CD4-positive, alpha-beta T cell (primary cell): ENCODE measurements at regions of chr1 and their contacts with region 1.

Region 1: GRCh38 chr1:107782217-107782845 is 182.6 kb downstream of the VAV3 start:
- DNase-seq: peak in 8 of 14 experiments; percentile 16 to 84 (median 52)
- ATAC-seq: no peak
- H3K4me3 ChIP-seq: no peak overlapping the region
- H3K4me3 Mint-ChIP-seq: no peak overlapping the region
- H3K27ac ChIP-seq: no peak overlapping the region
- H3K27ac Mint-ChIP-seq: no peak overlapping the region
- H3K4me1 ChIP-seq: peaks cover 17% of the 10 kb centered on the region
- H3K4me1 Mint-ChIP-seq: peaks cover 30% of the 10 kb centered on the region
- H3K27me3 ChIP-seq: no peaks in the 10 kb centered on the region
- H3K27me3 Mint-ChIP-seq: no peaks in the 10 kb centered on the region
- CTCF ChIP-seq: peak; percentile 86

Region 2: DNA sequence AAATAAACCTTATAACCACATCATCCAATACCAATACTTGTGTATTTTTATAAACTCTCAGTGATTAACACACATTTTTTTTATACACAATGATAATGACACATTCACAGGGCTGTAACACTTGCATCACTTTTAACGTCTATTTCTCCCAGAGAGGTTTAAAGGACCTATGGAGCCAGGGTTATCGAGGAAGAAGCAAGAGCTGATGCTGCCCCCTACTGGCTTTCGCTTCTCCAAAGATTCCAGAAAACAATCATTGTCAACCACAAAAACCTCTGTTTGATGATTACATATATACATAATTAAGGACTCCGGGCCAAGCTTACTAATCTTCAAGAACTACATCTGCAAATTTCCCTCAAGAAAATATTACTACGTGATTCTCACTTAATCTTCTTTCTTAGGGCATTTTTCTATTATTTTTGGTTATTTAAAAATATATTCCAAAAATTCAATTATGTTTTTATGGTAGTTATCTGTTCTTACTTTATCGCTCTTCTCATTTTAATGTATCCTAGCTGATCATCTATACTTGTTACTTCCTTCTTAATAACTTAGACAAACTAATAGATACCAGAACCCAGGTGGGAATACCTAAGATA is 31.9 kb before region 1 on chr1:
- CTCF ChIA-PET with region 1: no interaction called
- POLR2A ChIA-PET with region 1: no interaction called
- intact Hi-C with region 1: no loop called
- DNase-seq: peak in 4 of 14 experiments; percentile 15 to 25 (median 22)
- ATAC-seq: no peak
- H3K4me3 ChIP-seq: no peak overlapping the region
- H3K4me3 Mint-ChIP-seq: no peak overlapping the region
- H3K27ac ChIP-seq: no peak overlapping the region
- H3K27ac Mint-ChIP-seq: no peak overlapping the region
- H3K4me1 ChIP-seq: no peaks in the 10 kb centered on the region
- H3K4me1 Mint-ChIP-seq: no peaks in the 10 kb centered on the region
- H3K27me3 ChIP-seq: no peaks in the 10 kb centered on the region
- H3K27me3 Mint-ChIP-seq: no peaks in the 10 kb centered on the region
- CTCF ChIP-seq: peak; percentile 35

Region 3: DNA sequence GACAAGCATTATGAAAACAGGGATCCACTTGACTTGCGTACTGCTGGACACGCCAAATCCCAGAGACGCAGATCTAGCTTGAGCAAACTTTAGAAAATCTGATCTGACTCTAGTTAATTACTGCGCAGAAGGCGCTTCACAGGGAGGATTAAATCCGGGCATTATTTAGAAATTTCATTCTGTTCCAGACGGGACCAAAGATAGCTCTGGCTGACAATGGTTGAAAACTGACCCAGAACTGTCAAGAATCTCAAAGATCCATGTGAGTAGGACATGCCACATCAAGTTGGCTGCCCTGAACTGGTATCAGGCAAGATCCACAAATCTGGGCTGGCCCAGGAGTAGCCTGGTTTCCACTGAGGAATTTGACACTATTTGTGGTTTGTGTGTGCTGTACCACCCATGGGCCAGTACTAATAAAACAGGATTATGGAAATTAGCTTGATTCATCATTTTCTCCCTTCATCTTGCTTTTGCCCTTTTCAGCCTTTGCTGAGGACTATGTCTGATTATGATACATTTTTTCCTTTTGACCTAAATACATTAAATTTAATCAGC is 11.6 kb after region 1 on chr1:
- CTCF ChIA-PET with region 1: interaction called, 21 read pairs
- POLR2A ChIA-PET with region 1: no interaction called
- intact Hi-C with region 1: no loop called
- DNase-seq: no peak
- ATAC-seq: no peak
- H3K4me3 ChIP-seq: no peak overlapping the region
- H3K4me3 Mint-ChIP-seq: no peak overlapping the region
- H3K27ac ChIP-seq: no peak overlapping the region
- H3K27ac Mint-ChIP-seq: no peak overlapping the region
- H3K4me1 ChIP-seq: peaks cover under 1% of the 10 kb centered on the region
- H3K4me1 Mint-ChIP-seq: peaks cover 28% of the 10 kb centered on the region
- H3K27me3 ChIP-seq: no peaks in the 10 kb centered on the region
- H3K27me3 Mint-ChIP-seq: no peaks in the 10 kb centered on the region
- CTCF ChIP-seq: no peak

Region 4: DNA sequence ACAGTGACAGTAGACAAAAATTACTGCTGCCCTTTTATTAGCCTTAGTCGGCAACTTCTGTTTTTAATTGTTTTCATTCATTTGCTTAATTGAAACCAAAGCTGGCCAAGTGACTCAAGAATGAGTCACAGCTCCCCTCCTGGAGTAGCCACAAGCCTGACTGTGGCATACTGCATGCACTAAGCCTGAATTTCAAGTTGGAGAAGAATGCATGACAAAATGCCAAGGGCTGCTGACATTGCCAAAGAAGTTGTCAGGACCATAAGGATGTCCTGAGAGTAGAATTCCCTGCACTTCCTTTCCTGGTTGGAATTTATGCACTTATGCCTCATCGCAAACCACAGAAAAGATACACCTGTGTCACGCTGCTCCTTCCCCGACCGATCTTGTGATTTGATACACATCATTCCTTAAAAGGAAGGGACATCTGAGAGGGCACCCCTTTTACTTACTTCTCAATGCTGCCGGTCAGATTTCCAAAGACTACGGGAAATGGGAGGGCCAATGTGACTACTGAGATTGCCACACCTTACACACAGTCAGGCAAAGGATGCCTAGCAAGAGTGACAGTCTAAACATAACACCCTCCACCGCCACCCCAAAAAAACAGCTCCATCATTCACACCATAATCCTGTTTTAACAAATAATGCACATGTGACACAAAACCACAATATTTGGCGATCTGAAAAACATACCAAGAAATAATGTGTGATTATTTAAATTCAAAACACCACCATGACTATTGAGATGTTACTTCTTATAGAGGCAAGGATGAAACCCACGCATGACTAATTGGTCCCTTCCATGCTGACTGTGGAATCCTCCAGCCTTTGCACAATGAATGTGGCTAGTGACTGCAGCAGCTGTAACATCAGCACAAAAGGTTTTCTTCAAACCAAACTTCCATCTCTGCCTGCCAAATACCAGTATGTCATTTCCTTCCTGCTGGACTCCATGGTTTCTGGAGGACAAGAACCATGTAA is 154.5 kb after region 1 on chr1:
- CTCF ChIA-PET with region 1: no interaction called
- POLR2A ChIA-PET with region 1: no interaction called
- intact Hi-C with region 1: loop called in 1 of 2 experiments (anchors 10 kb)
- DNase-seq: peak in 4 of 14 experiments; percentile 42 to 76 (median 64)
- ATAC-seq: peak; percentile 32
- H3K4me3 ChIP-seq: no peak overlapping the region
- H3K4me3 Mint-ChIP-seq: no peak overlapping the region
- H3K27ac ChIP-seq: no peak overlapping the region
- H3K27ac Mint-ChIP-seq: no peak overlapping the region
- H3K4me1 ChIP-seq: peaks cover 15% of the 10 kb centered on the region
- H3K4me1 Mint-ChIP-seq: peaks cover 42% of the 10 kb centered on the region
- H3K27me3 ChIP-seq: no peaks in the 10 kb centered on the region
- H3K27me3 Mint-ChIP-seq: no peaks in the 10 kb centered on the region
- CTCF ChIP-seq: no peak

Region 5: GRCh38 chr1:108050911-108051629 is 268.7 kb after region 1 on chr1:
- CTCF ChIA-PET with region 1: no interaction called
- POLR2A ChIA-PET with region 1: no interaction called
- intact Hi-C with region 1: loop called in 1 of 2 experiments (anchors 1 kb)
- DNase-seq: peak in 3 of 14 experiments; percentile 16 to 28 (median 25)
- ATAC-seq: peak; percentile 75
- H3K4me3 ChIP-seq: peak overlapping the region; percentile 5
- H3K4me3 Mint-ChIP-seq: peak overlapping the region; percentile 59
- H3K27ac ChIP-seq: peak overlapping the region in 1 of 2 donors; percentile 18
- H3K27ac Mint-ChIP-seq: no peak overlapping the region
- H3K4me1 ChIP-seq: peaks cover 24% of the 10 kb centered on the region
- H3K4me1 Mint-ChIP-seq: peaks cover 3% of the 10 kb centered on the region
- H3K27me3 ChIP-seq: no peaks in the 10 kb centered on the region
- H3K27me3 Mint-ChIP-seq: no peaks in the 10 kb centered on the region
- CTCF ChIP-seq: no peak

Region 6: GRCh38 chr1:108130794-108131193 is 348.5 kb after region 1 on chr1:
- CTCF ChIA-PET with region 1: interaction called, 152 read pairs
- POLR2A ChIA-PET with region 1: interaction called, 18 read pairs
- intact Hi-C with region 1: loop called (anchors 1 kb)
- DNase-seq: peak in 2 of 14 experiments; percentile 21 to 37
- ATAC-seq: no peak
- H3K4me3 ChIP-seq: no peak overlapping the region
- H3K4me3 Mint-ChIP-seq: no peak overlapping the region
- H3K27ac ChIP-seq: no peak overlapping the region
- H3K27ac Mint-ChIP-seq: no peak overlapping the region
- H3K4me1 ChIP-seq: no peaks in the 10 kb centered on the region
- H3K4me1 Mint-ChIP-seq: peaks cover 1% of the 10 kb centered on the region
- H3K27me3 ChIP-seq: no peaks in the 10 kb centered on the region
- H3K27me3 Mint-ChIP-seq: no peaks in the 10 kb centered on the region
- CTCF ChIP-seq: no peak